ENCODE measurements at regions of chr21 and their contacts with region 1.

Region 1: GRCh38 chr21:36630485-36631206 is 68.3 kb upstream of the SIM2 start:
- DNase-seq: peak; percentile 74
- H3K4me3 Mint-ChIP-seq: no peak overlapping the region
- H3K27ac Mint-ChIP-seq: no peak overlapping the region
- H3K4me1 Mint-ChIP-seq: no peaks in the 10 kb centered on the region
- H3K27me3 Mint-ChIP-seq: no peaks in the 10 kb centered on the region

Region 2: DNA sequence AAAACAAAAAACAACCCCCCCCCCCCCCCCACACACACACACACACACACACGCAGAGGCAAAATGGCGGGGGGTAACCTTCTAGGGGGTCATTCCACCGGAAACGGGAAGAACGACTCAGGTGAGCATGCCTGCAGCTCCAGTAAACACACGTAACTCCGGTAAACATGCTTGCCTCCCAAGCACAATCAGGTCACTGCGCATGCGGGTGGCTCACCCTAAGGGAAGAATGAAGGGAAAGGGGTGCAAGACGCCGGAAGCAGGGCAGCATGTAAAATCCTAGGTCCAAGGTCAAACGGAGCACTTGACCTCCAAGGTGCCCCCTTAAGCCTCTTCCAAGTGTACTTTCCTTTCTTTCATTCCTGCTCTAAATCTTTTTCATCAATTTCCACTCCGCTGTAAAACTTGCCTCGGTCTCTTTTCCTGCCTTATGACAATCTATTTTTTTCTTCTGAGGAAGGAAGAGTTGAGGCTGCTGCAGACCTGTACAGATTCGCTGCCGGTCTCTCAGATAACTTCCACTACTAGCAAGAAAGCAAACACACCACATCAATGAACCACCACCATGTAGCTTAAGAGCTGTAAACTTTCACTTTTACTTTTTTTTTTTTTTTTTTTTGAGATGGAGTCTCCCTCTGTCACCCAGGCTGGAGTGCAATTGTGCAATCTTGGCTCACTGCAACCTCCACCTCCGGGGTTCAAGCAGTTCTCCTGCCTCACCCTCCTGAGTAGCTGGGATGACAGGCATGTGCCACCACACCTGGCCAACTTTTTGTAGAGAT is 516.8 kb before region 1 on chr21:
- CTCF ChIA-PET with region 1: no interaction called
- intact Hi-C with region 1: no loop called
- DNase-seq: peak; percentile 33
- H3K4me3 Mint-ChIP-seq: peak overlapping the region; percentile 76
- H3K27ac Mint-ChIP-seq: peak overlapping the region; percentile 51
- H3K4me1 Mint-ChIP-seq: peaks cover 21% of the 10 kb centered on the region
- H3K27me3 Mint-ChIP-seq: no peaks in the 10 kb centered on the region

Region 3: GRCh38 chr21:36203617-36203917 is 427.1 kb before region 1 on chr21:
- CTCF ChIA-PET with region 1: no interaction called
- intact Hi-C with region 1: no loop called
- DNase-seq: peak; percentile 79
- H3K4me3 Mint-ChIP-seq: no peak overlapping the region
- H3K27ac Mint-ChIP-seq: peak overlapping the region; percentile 9
- H3K4me1 Mint-ChIP-seq: peaks cover 22% of the 10 kb centered on the region
- H3K27me3 Mint-ChIP-seq: no peaks in the 10 kb centered on the region

Region 4: DNA sequence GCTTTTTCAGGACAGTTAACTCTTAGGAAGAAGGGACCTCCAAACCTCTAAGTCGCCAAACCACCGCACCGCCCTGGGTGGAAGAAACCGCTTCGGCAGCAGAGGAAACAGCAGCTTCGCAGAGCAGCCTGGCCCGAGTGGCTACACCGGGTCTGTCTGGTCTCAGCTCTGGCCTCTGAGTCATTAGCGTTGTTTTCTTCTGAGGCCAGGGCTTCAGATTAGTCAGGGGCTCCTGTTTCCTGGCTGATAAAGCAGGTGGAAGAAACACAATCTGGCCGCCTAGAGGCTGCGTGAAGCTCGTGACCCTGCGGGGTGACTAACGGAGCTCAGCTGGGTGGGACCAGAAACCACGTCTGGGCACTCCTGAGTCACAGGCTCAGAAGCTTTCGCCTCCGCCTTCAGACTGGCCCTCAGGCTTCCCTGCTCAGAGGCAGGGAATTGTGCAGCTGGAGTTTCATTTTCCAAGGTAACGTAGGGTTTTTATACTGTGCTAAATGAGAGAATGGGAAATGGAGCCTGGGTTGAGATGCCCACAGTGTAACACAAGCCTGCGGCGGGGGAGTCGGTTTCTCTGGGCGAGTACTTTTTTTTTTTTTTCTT is 200.6 kb before region 1 on chr21:
- CTCF ChIA-PET with region 1: no interaction called
- intact Hi-C with region 1: no loop called
- DNase-seq: peak; percentile 89
- H3K4me3 Mint-ChIP-seq: peak overlapping the region; percentile 54
- H3K27ac Mint-ChIP-seq: peak overlapping the region; percentile 27
- H3K4me1 Mint-ChIP-seq: peaks cover 14% of the 10 kb centered on the region
- H3K27me3 Mint-ChIP-seq: peaks cover 27% of the 10 kb centered on the region

Region 5: GRCh38 chr21:36504067-36505058 is 126.3 kb before region 1 on chr21:
- CTCF ChIA-PET with region 1: interaction called, 13 read pairs
- intact Hi-C with region 1: no loop called
- DNase-seq: peak; percentile 63
- H3K4me3 Mint-ChIP-seq: no peak overlapping the region
- H3K27ac Mint-ChIP-seq: no peak overlapping the region
- H3K4me1 Mint-ChIP-seq: no peaks in the 10 kb centered on the region
- H3K27me3 Mint-ChIP-seq: no peaks in the 10 kb centered on the region

Region 6: GRCh38 chr21:36589355-36589971 is 41.2 kb before region 1 on chr21:
- CTCF ChIA-PET with region 1: interaction called, 10 read pairs
- intact Hi-C with region 1: no loop called
- DNase-seq: peak; percentile 60
- H3K4me3 Mint-ChIP-seq: no peak overlapping the region
- H3K27ac Mint-ChIP-seq: no peak overlapping the region
- H3K4me1 Mint-ChIP-seq: no peaks in the 10 kb centered on the region
- H3K27me3 Mint-ChIP-seq: no peaks in the 10 kb centered on the region

Region 7: DNA sequence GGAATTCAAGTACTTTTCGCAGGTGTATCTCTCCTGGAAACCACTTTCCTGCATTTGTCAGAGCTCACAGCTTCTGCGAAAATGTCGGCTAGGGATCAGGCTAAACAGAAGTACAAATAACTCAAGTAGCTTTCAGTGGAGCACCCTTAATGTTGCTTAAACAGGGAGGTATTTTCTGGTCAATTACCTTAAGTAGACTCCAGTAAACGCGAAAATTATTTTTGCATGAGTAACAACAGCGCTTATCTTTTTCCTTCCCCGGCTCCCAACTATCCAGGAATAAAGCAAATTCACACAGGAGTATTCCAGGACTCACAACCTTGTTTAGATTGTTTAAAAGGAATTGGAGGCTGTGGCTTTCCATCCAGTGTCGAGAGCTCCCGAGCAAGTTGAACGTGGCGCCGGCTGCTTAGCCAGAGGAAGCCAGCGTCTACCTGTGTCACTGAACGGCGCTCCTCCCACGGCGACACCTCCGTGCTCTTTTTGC is 61.0 kb after region 1 on chr21:
- CTCF ChIA-PET with region 1: interaction called, 16 read pairs
- intact Hi-C with region 1: no loop called
- DNase-seq: no peak
- H3K4me3 Mint-ChIP-seq: no peak overlapping the region
- H3K27ac Mint-ChIP-seq: no peak overlapping the region
- H3K4me1 Mint-ChIP-seq: peaks cover 14% of the 10 kb centered on the region
- H3K27me3 Mint-ChIP-seq: peaks cover 76% of the 10 kb centered on the region

Region 8: DNA sequence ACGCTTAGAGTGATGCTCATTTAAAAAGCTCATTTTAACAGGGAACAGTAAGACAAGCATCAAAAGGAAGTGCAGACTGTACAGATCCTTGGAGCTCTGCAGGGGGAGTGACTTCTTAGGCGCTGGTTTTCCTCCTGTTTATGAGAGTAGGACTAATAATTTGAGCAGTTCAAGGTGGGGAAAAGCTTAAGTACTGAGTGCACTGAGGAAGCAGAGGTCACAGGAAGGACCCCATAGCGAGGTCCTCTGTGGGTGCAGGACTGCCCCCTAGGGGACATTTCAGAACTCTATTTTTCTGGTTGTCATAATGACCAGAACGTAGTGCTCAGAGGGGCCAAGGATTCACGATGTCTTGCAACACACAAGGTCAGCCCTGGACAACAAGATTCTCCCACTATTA is 223.7 kb after region 1 on chr21:
- CTCF ChIA-PET with region 1: interaction called, 9 read pairs
- intact Hi-C with region 1: loop called (anchors 1 kb)
- DNase-seq: peak; percentile 26
- H3K4me3 Mint-ChIP-seq: no peak overlapping the region
- H3K27ac Mint-ChIP-seq: no peak overlapping the region
- H3K4me1 Mint-ChIP-seq: peaks cover 8% of the 10 kb centered on the region
- H3K27me3 Mint-ChIP-seq: no peaks in the 10 kb centered on the region

Region 9: DNA sequence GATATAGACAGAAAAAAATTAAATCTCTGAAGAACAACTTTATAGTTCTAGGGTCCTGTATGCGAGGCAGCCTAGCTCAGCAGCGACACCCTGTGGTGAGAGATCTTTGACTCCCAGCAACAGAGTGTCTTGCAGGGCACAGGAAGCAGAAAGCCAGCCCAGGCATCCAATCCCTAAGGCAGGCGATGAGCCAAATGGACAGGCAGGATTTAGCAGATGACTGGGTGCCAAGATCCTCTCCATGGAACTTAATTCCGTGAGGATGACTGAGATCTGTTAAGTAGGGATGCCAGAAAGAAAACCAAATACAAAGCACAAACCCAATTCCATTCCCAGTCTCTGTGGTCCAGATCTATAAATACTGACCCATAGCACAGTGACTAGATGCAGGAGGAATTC is 297.1 kb after region 1 on chr21:
- CTCF ChIA-PET with region 1: interaction called, 34 read pairs
- intact Hi-C with region 1: loop called (anchors 1 kb)
- DNase-seq: peak; percentile 87
- H3K4me3 Mint-ChIP-seq: no peak overlapping the region
- H3K27ac Mint-ChIP-seq: no peak overlapping the region
- H3K4me1 Mint-ChIP-seq: peaks cover 8% of the 10 kb centered on the region
- H3K27me3 Mint-ChIP-seq: no peaks in the 10 kb centered on the region